ENCODE measurements at regions of chr14 and their contacts with region 1.

Region 1: GRCh38 chr14:23320774-23321571 is at the start of gene PABPN1:
- DNase-seq: peak; percentile 99
- H3K4me3 Mint-ChIP-seq: peak within 1 kb of the TSS; percentile 94
- H3K27ac Mint-ChIP-seq: peak within 1 kb of the TSS; percentile 96
- H3K4me1 Mint-ChIP-seq: peaks cover 18% of the 10 kb centered on the region
- H3K27me3 Mint-ChIP-seq: no peaks in the 10 kb centered on the region
- total RNA-seq, gene PABPN1: 194 to 204 TPM

Region 2: GRCh38 chr14:22918804-22919600 is 402.0 kb before region 1 on chr14 and contains the start of gene RBM23:
- CTCF ChIA-PET with region 1: no interaction called
- intact Hi-C with region 1: loop called (anchors 1 kb)
- DNase-seq: peak; percentile 100
- H3K4me3 Mint-ChIP-seq: peak within 1 kb of the TSS; percentile 94
- H3K27ac Mint-ChIP-seq: peak within 1 kb of the TSS; percentile 99
- H3K4me1 Mint-ChIP-seq: peaks cover 42% of the 10 kb centered on the region
- H3K27me3 Mint-ChIP-seq: peaks cover 3% of the 10 kb centered on the region
- total RNA-seq, gene RBM23: 53.5 to 61.2 TPM

Region 3: DNA sequence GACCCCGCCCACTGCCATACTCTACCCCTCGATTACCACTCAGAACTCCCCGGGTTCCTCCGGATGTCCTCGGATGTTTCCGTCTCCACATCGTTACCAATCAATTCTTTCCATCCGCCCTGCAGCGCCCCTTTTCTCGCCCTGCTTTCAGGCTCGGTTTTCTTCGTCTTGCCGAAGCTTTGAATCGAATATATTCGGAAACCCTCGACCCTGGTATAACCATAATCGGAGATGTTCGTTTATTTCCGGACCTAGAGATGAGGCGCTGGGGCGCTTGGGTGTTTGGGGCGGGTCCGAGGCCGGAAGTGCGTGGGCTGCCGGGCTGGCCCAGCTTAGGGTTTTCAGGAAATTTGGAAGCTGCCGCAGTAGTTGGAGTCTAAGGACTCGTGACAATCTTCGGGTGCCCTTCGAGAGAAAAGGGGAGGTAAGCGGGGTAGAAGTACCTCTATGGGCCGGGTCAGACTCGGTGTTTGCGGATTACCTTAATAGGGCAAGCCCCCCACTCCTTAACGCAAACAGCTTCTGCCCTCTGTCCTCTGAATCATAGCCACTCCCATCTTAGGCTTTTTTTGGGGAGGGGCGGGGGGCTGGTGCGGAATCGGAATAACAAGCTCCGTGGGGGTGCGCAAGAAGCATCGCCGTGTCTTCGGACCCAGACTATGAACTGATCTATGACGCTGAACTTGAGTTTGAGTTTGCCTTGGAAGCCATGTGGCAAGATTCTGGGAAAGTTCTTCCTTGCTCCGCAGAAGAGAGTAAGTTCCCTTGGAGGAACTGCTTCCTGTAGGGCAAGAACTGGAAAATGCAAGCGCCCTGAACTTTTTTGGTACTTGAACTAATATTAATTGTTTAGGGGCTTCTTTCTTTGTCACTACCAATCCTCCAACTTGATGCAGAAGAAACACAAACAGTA is 225.5 kb before region 1 on chr14 and contains the start of gene C14orf119:
- CTCF ChIA-PET with region 1: no interaction called
- intact Hi-C with region 1: loop called (anchors 1 kb)
- DNase-seq: peak; percentile 100
- H3K4me3 Mint-ChIP-seq: no peak within 1 kb of the TSS
- H3K27ac Mint-ChIP-seq: no peak within 1 kb of the TSS
- H3K4me1 Mint-ChIP-seq: peaks cover 38% of the 10 kb centered on the region
- H3K27me3 Mint-ChIP-seq: no peaks in the 10 kb centered on the region
- total RNA-seq, gene C14orf119: 39.8 to 44.2 TPM

Region 4: DNA sequence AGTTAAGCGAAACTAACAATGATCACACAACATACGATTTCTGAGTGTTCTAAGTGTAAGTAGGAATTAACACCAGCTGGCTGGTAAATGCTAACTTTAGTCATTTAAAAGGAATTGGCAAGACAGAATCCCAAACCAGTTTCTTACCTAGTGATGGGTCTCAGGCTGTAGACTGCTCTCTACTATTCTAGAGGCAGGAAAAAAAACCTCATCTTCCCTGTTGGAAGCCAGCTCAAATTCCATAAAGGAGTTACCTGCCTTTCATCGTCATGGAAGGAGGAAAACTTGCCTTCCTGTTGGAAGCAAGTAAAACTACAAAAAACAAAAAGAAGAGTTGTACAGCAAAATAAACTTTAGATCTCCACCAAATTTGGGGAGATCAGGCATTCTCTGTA is 113.8 kb before region 1 on chr14:
- CTCF ChIA-PET with region 1: no interaction called
- intact Hi-C with region 1: no loop called
- DNase-seq: no peak
- H3K4me3 Mint-ChIP-seq: no peak overlapping the region
- H3K27ac Mint-ChIP-seq: no peak overlapping the region
- H3K4me1 Mint-ChIP-seq: no peaks in the 10 kb centered on the region
- H3K27me3 Mint-ChIP-seq: peaks cover 1% of the 10 kb centered on the region

Region 5: GRCh38 chr14:23301288-23301968 is 19.5 kb before region 1 on chr14:
- CTCF ChIA-PET with region 1: interaction called, 66 read pairs
- intact Hi-C with region 1: loop called (anchors 1 kb)
- DNase-seq: peak; percentile 96
- H3K4me3 Mint-ChIP-seq: peak overlapping the region; percentile 90
- H3K27ac Mint-ChIP-seq: peak overlapping the region; percentile 92
- H3K4me1 Mint-ChIP-seq: peaks cover 12% of the 10 kb centered on the region
- H3K27me3 Mint-ChIP-seq: peaks cover 13% of the 10 kb centered on the region

Region 6: GRCh38 chr14:23555882-23556699 is 235.1 kb after region 1 on chr14 and contains the start of gene THTPA:
- CTCF ChIA-PET with region 1: interaction called, 22 read pairs
- intact Hi-C with region 1: loop called (anchors 1 kb)
- DNase-seq: peak; percentile 96
- H3K4me3 Mint-ChIP-seq: peak within 1 kb of the TSS; percentile 95
- H3K27ac Mint-ChIP-seq: peak within 1 kb of the TSS; percentile 94
- H3K4me1 Mint-ChIP-seq: peaks cover 38% of the 10 kb centered on the region
- H3K27me3 Mint-ChIP-seq: no peaks in the 10 kb centered on the region
- total RNA-seq, gene THTPA: 6.2 to 6.6 TPM

Region 7: DNA sequence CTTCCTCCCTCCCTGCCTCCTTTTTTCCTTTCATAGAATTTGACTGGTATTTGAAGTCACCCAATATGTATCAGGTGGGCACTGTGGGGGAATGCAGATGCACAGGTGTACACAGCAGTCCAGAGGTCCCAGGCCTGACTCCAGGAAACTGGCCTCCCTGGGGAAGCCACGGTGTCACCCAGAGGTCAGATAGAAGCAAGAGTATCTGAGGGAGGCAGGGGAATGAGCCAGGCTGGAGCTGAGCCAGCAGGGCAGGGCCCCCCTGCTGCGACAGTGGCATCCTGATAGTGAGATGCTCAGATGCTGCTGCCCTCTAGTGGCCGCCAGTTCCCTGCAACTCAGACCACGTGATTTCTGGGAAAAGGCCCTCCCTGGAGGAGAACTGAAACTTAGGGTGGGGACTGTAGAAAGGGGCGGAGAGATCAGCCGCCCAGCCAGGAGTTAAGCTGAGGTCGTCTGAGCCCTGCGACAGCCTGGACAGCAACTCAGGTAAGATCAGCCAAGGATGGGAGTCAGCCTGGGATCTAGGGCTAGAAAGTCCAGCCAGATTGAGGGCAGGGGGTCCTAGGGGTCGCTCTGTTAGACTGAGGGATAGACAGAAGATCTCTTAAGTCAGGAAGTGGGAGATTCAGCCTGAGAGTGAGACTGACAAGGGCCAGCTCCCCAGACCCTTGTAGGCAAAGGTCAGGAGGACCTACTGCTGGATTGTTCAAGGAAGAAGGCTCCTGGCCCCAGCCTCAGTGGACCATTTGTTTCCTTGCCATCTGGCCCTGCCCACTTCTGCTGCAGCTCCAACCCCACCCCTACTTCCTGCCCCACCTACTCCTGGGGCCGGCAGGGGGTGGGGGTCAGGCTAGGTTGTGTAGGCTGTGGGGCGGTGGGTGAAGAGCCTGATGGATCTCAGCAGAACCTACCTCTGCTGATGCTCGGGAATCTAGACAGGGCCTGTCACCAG is 840.2 kb after region 1 on chr14 and contains the start of gene IRF9:
- CTCF ChIA-PET with region 1: no interaction called
- intact Hi-C with region 1: loop called (anchors 2 kb)
- DNase-seq: peak; percentile 99
- H3K4me3 Mint-ChIP-seq: peak within 1 kb of the TSS; percentile 99
- H3K27ac Mint-ChIP-seq: peak within 1 kb of the TSS; percentile 100
- H3K4me1 Mint-ChIP-seq: peaks cover 43% of the 10 kb centered on the region
- H3K27me3 Mint-ChIP-seq: no peaks in the 10 kb centered on the region
- total RNA-seq, gene IRF9: 202 to 212 TPM

Measured in activated naive CD4-positive, alpha-beta T cell treated with anti-CD3 and anti-CD28 coated beads for 36 hours (primary cell).